IMR-90 (cell line): ENCODE measurements at regions of chr1 and their contacts with region 1.

Region 1: DNA sequence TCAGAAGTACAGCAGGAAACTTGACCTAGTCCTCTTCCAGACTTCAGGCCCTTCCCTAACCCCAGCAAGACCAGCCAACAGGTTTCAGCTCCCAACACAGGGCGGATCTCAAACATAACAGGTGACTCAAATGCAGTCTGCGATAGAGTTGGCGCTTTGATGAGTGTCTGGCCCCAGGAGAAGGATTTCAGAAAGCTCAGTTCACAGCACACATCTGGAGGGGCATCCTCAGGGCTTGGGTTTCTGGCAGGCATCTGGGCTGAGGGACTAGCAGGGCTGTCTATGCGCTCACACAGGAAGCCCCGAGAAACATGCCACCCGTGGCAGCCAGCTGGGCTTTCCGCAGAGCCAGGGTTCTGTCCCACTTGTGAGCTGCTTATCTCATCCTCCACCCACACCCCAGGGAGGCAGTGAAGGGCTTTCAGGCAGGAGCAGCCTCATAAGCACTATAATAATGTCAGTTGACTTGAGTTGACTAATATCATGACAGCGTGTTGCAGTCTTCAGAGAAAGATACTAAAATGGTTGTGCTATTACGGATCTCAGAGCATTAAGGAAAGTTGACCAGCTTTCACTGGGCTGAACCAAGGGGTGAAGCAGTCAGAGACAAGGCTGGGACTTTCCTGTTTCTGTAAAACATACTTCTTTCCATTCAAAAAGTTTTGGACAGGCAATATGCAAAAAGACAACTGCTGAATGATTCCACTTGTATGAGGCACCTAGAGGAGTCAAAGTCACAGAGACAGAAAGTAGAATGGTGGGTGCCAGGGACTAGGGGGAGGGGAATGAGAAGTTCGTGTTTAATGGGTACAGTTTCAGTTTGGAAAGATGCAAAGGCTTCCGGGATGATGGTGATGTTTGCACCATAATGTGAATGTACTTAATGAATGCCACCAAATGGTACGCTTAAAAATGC is 233.0 kb upstream of the IRF2BP2 start:
- DNase-seq: peak; percentile 27
- ATAC-seq: no peak
- H3K4me3 ChIP-seq: no peak overlapping the region
- H3K27ac ChIP-seq: no peak overlapping the region
- H3K4me1 ChIP-seq: peaks cover 7% of the 10 kb centered on the region
- H3K27me3 ChIP-seq: no peaks in the 10 kb centered on the region
- CTCF ChIP-seq: no peak
- POLR2A ChIP-seq: no peak
- RAD21 ChIP-seq: no peak

Region 2: DNA sequence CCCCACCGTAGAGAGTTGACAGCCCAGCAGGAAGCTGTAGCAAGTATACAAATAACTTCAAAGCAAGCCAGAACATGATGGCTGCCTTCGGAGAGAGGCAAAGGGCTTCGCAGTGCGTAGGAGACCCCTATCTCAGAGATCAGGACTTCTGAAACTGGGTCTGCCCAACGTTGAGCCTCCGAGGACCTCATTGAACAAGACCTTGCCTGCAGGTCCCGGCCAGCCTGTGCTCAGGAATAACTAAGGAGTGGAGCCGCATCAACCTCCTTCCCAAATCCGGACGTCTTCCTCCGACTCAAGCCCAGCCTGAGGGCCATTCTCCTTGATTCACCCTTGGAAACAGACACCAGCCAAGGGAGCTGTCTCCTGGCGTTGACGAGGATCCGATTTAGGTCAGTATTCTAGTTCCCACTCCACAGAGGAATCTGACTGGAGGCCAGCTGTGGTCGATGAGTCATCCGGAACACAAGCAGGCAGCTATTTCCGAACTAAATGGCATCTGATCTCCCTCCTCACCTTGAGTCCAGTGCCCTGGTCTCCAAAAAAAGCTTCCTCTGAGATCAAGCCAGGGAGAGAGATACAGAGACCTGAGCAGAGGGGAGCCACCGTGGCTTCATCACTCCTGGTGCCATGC is 636.2 kb before region 1 on chr1:
- CTCF ChIA-PET with region 1: no interaction called
- POLR2A ChIA-PET with region 1: no interaction called
- dilution Hi-C with region 1: no loop called
- in situ Hi-C with region 1: no loop called
- intact Hi-C with region 1: no loop called
- DNase-seq: peak; percentile 67
- ATAC-seq: peak; percentile 74
- H3K4me3 ChIP-seq: no peak overlapping the region
- H3K27ac ChIP-seq: no peak overlapping the region
- H3K4me1 ChIP-seq: 0 out of 2 replicates have a peak, but pooled peaks cover 2% of the 10 kb centered on the region
- H3K27me3 ChIP-seq: no peaks in the 10 kb centered on the region
- CTCF ChIP-seq: no peak
- POLR2A ChIP-seq: no peak
- RAD21 ChIP-seq: no peak

Region 3: GRCh38 chr1:234730770-234731568 is 112.0 kb before region 1 on chr1:
- CTCF ChIA-PET with region 1: no interaction called
- POLR2A ChIA-PET with region 1: no interaction called
- dilution Hi-C with region 1: loop called (anchors 25 kb)
- in situ Hi-C with region 1: no loop called
- intact Hi-C with region 1: no loop called
- DNase-seq: peak; percentile 93
- ATAC-seq: peak; percentile 78
- H3K4me3 ChIP-seq: no peak overlapping the region
- H3K27ac ChIP-seq: no peak overlapping the region; the same call in 1 of the 2 replicates
- H3K4me1 ChIP-seq: peaks cover 30% of the 10 kb centered on the region
- H3K27me3 ChIP-seq: no peaks in the 10 kb centered on the region
- CTCF ChIP-seq: no peak
- POLR2A ChIP-seq: no peak
- RAD21 ChIP-seq: no peak